Activated CD4-positive, alpha-beta T cell treated with anti-CD3 and anti-CD28 coated beads for 36 hours (primary cell): ENCODE measurements at regions of chr19 and their contacts with region 1.

Region 1: GRCh38 chr19:662962-663681 is at the start of gene RNF126:
- DNase-seq: peak; percentile 98
- ATAC-seq: peak; percentile 49
- H3K4me3 Mint-ChIP-seq: peak within 1 kb of the TSS; percentile 96
- H3K27ac Mint-ChIP-seq: peak within 1 kb of the TSS; percentile 95
- H3K4me1 Mint-ChIP-seq: peaks cover 37% of the 10 kb centered on the region
- H3K27me3 Mint-ChIP-seq: no peaks in the 10 kb centered on the region
- total RNA-seq, gene RNF126: 83.0 to 91.3 TPM

Region 2: GRCh38 chr19:531009-531752 is 131.9 kb before region 1 on chr19:
- CTCF ChIA-PET with region 1: no interaction called
- POLR2A ChIA-PET with region 1: no interaction called
- intact Hi-C with region 1: loop called in 1 of 2 experiments (anchors 1 kb)
- DNase-seq: peak; percentile 93
- ATAC-seq: peak; percentile 78
- H3K4me3 Mint-ChIP-seq: peak overlapping the region; percentile 77
- H3K27ac Mint-ChIP-seq: peak overlapping the region; percentile 84
- H3K4me1 Mint-ChIP-seq: peaks cover 24% of the 10 kb centered on the region
- H3K27me3 Mint-ChIP-seq: peaks cover 1% of the 10 kb centered on the region

Region 3: DNA sequence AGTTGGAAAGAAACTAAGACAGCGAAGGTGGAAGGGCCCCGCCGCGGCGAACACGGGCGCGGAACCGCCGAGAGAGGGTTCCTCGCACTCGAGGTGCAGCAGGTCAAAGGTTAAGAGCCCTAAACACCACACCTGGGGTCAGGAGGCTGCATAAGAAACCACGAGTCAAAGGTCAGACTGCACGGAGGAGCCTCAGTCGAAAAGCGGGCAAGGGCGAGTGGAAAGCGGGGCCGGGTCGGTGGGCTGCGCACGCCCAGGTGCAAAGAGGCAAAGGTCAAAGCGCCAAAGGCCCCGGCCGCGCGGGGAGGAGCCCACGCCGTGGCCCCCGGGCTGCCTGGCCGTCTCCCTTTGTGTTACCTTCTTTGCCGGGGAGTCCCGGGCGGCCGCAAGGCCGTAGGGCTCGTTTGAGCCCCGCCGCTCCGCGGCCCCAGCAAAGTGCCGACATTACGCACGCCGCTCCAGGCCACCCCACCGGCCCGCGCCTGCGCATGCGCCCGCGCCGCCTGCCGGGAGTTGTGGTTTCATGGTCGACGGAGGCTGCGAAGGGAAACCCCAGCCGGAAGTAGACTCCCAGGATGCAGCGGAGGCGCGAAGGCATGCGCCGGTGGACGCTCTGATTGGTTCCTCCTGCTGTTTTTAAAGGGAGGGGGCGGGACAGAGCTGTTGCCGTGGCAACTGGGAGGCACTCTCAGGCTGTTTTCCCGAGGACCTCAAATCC is 29.9 kb before region 1 on chr19 and contains the start of gene POLRMT:
- CTCF ChIA-PET with region 1: interaction called, 4 read pairs
- POLR2A ChIA-PET with region 1: no interaction called
- intact Hi-C with region 1: loop called (anchors 1 kb)
- DNase-seq: peak; percentile 98
- ATAC-seq: peak; percentile 98
- H3K4me3 Mint-ChIP-seq: peak within 1 kb of the TSS; percentile 97
- H3K27ac Mint-ChIP-seq: peak within 1 kb of the TSS; percentile 91
- H3K4me1 Mint-ChIP-seq: peaks cover 29% of the 10 kb centered on the region
- H3K27me3 Mint-ChIP-seq: no peaks in the 10 kb centered on the region
- total RNA-seq, gene POLRMT: 69.0 to 77.4 TPM

Region 4: DNA sequence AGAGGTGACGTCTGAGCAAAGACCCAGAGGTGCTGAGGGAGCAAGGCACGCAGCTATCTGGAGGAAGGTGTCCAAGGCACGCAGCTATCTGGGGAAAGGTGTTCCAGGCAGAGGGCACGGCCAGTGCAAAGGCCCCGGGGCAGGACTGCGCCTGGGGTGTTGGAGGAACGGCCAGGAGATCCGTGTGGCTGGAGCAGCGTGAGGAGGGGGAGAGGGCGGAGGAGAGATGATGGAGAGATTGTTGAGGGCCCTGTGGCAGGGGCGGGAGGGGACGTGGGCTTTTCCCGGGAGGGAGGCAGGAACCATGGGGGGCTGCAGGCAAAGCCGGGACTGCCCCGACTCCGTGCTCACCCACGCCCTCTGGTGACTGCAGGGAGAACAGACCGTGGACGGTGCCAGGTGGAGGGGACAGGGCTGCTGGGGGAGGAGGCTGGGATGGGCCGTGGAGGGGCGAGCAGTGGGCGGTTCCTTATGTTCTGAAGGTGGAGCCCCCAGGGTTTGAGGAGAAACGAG is 74.5 kb after region 1 on chr19:
- CTCF ChIA-PET with region 1: interaction called, 13 read pairs
- POLR2A ChIA-PET with region 1: no interaction called
- intact Hi-C with region 1: loop called (anchors 1 kb)
- DNase-seq: peak; percentile 76
- ATAC-seq: peak; percentile 79
- H3K4me3 Mint-ChIP-seq: no peak overlapping the region
- H3K27ac Mint-ChIP-seq: no peak overlapping the region
- H3K4me1 Mint-ChIP-seq: no peaks in the 10 kb centered on the region
- H3K27me3 Mint-ChIP-seq: no peaks in the 10 kb centered on the region

Region 5: DNA sequence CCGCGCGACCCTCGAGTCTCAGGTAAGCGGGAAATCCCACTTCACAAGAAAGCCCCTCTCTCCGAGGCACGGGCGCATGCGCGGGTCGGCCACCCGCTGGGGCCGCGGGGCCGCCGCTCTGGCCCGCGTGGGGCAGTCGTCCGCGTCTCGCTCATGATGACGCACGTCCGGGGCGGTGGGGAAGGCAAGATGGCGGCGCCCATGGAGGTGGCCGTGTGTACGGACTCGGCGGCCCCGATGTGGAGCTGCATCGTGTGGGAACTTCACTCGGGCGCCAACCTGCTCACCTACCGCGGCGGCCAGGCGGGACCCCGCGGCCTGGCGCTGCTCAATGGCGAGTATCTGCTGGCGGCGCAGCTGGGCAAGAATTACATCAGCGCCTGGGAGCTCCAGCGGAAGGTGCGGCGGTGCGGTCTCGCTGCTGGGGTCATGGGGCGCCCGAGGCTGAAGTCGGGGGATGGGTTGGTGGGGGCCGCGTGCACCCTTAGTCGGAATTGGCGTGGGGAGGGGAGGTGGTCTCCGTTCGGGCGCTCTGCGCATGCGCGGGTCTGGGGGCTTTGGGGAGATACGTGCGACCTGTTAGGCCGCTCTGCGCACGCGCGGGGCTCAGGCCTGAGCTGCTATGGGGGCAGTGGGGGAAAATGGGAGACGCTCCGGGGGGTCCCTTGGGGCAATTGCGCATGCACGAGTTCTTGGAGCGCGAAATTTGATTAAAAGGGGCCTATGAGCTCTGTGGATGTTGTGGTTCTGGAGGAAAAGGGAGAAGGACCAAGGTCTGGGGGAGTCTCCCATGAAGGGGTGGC is 321.2 kb after region 1 on chr19 and contains the start of gene WDR18:
- CTCF ChIA-PET with region 1: no interaction called
- POLR2A ChIA-PET with region 1: no interaction called
- intact Hi-C with region 1: loop called in 1 of 2 experiments (anchors 1 kb)
- DNase-seq: peak; percentile 95
- ATAC-seq: peak; percentile 92
- H3K4me3 Mint-ChIP-seq: peak within 1 kb of the TSS; percentile 91
- H3K27ac Mint-ChIP-seq: peak within 1 kb of the TSS; percentile 86
- H3K4me1 Mint-ChIP-seq: peaks cover 14% of the 10 kb centered on the region
- H3K27me3 Mint-ChIP-seq: no peaks in the 10 kb centered on the region
- total RNA-seq, gene WDR18: 71.6 to 87.8 TPM

Region 6: DNA sequence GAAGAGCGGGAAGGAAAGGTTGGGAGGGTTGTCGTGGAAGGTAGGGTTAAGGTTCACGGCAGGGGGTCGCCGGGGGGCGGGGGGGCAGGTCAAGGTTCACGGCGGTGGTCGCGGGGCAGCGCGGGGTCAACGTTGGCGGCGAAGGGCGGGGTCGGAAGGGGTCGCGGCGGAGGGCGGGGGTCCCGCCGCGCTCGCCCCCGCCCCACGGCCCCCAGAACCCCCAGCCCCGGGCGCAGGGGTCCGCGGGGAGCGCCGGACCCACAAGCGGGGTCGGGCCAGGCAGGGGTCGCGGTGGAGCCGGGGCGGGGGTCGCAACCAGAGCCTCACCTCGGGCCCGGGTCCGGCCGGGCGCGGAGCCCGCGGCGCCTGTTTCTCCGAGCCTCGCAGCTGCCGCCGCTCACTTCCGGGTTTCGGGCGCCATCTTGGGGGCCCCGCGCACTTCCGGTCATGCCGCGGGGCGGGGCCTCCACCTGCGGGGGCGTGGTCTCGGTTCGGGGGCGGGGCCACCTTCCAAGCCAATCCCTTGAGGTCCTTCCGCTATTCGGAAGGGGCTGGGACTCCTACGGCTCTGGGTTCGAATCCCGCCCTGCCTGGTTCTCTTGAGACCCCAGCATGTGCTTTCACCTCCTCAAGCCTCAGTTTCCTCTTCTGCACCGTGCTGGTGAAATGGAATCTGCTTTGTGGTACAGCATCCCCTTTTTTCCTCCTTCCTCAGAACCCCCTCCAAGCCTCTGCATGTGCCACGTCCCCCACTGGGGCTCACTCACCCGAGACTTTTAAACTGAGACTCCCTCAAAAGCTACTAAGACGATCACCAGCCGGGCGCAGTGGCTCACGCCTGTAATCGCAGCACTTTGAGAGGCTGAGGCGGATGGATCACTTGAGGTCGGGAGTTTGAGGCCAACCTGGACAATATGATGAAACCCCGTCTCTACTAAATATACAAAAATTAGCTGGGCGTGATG is 511.0 kb after region 1 on chr19 and contains the start of gene SBNO2:
- CTCF ChIA-PET with region 1: no interaction called
- POLR2A ChIA-PET with region 1: no interaction called
- intact Hi-C with region 1: loop called in 1 of 2 experiments (anchors 5 kb)
- DNase-seq: peak; percentile 96
- ATAC-seq: peak; percentile 93
- H3K4me3 Mint-ChIP-seq: peak within 1 kb of the TSS; percentile 89
- H3K27ac Mint-ChIP-seq: peak within 1 kb of the TSS; percentile 92
- H3K4me1 Mint-ChIP-seq: peaks cover 34% of the 10 kb centered on the region
- H3K27me3 Mint-ChIP-seq: no peaks in the 10 kb centered on the region
- total RNA-seq, gene SBNO2: 108 to 113 TPM